Left ventricle myocardium inferior (tissue), 1 donor: ENCODE measurements at regions of chr9 and their contacts with region 1.

Region 1: DNA sequence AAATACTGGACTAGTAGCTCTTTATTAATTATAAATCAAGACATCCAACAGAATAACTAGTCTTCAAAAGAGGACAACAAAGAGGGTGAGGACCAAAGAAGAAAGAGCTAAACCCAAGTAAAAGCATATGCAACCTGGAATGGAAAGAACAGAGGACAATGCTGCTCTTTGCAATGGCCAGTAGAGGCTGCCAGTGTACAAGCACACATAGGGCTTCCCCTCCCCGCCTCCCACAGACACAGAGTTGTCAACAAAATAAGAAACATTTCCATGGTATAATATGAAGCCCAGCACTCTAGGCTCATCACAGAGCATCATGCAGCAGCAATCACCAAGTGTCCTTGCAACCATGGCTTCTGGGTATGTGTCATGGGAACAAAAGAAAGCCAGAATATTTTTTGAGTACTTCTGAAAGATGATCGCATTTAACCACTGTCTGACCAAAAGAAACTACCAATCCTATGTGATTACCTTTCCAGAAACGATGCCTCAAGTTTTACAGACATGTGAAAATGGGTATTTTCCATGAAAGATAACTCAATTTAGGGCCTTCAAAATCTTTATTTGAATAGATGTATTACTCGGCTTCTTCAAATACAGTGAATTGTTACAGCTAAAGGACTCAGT is 58.1 kb downstream of the RFX3 start:
- DNase-seq: peak; percentile 42
- H3K4me3 ChIP-seq: no peak overlapping the region
- H3K27ac ChIP-seq: no peak overlapping the region
- H3K4me1 ChIP-seq: peaks cover 21% of the 10 kb centered on the region
- H3K27me3 ChIP-seq: no peaks in the 10 kb centered on the region
- CTCF ChIP-seq: peak; percentile 89

Region 2: DNA sequence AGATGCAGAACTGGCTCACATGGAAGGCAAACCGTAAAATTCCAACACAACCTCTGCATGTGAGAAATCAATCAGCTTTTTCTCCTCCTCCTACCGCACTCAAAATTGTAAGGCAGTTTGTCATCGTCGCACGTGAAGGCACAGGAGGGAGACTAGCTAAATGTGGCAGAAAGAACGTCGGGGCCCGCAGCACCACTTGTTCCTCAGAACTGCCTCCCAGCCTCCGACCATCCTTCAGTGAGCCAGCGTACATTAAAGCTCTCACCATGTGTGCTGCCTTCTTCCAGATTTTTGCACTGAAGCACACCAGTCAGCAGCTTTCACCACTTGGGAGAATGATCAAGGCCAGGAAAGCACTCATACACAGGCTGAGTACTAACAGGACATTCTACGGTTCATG is 47.8 kb before region 1 on chr9:
- intact Hi-C with region 1: no loop called
- DNase-seq: no peak
- H3K4me3 ChIP-seq: no peak overlapping the region
- H3K27ac ChIP-seq: no peak overlapping the region
- H3K4me1 ChIP-seq: no peaks in the 10 kb centered on the region
- H3K27me3 ChIP-seq: no peaks in the 10 kb centered on the region
- CTCF ChIP-seq: no peak

Region 3: DNA sequence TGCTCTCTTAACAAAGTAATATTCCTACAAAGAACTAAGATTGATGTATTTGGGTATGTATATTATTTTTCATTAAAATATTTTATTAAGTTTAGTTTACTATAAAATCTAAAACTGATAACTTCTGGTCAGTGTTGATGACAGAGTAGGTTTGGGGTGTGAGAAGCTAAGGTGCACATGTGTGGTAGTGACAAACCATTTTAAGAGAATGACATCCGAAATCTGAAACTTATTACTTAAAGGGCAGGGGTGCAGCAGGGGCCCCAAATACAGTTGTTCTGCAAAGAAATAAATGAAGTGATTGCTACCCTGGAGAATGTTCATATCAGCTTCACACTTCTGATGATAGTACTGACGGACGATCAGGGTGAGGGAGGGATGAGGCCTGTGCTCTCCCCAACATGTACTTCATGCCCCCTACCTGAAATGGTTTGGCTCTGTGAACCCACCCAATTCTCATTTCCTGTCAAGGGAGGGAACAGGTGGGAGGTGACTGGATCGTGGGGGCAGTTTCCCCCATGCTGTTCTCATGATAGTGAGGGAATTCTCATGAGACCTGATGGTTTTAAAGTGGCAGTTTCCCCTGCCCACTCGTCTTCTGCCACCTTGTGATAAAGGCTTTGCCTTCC is 183.4 kb after region 1 on chr9:
- intact Hi-C with region 1: loop called (anchors 10 kb)
- DNase-seq: no peak
- H3K4me3 ChIP-seq: no peak overlapping the region
- H3K27ac ChIP-seq: no peak overlapping the region
- H3K4me1 ChIP-seq: no peaks in the 10 kb centered on the region
- H3K27me3 ChIP-seq: no peaks in the 10 kb centered on the region
- CTCF ChIP-seq: no peak

Region 4: DNA sequence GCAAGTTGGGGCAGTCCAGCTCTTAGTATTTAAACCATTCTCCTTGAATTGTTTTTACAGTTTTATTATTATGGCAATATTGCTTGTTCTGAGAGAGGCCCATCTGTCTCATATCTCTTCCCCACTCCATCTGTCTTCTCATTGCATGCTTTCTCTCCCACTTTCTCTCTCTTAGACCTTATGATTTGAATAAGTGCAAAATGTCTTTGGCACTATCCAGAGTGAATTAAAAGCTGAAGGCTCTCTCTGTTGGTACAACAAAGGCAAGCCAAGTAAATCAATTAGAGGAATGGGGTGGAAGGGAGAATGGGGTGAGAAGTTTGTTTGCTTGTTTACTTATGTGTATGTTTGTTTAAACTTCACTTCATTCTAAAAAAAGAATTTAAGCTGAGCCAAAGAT is 253.4 kb after region 1 on chr9:
- intact Hi-C with region 1: loop called (anchors 10 kb)
- DNase-seq: no peak
- H3K4me3 ChIP-seq: no peak overlapping the region
- H3K27ac ChIP-seq: no peak overlapping the region
- H3K4me1 ChIP-seq: no peaks in the 10 kb centered on the region
- H3K27me3 ChIP-seq: no peaks in the 10 kb centered on the region
- CTCF ChIP-seq: no peak